A673 (cell line): ENCODE measurements at regions of chr5 and their contacts with region 1.

Region 1: DNA sequence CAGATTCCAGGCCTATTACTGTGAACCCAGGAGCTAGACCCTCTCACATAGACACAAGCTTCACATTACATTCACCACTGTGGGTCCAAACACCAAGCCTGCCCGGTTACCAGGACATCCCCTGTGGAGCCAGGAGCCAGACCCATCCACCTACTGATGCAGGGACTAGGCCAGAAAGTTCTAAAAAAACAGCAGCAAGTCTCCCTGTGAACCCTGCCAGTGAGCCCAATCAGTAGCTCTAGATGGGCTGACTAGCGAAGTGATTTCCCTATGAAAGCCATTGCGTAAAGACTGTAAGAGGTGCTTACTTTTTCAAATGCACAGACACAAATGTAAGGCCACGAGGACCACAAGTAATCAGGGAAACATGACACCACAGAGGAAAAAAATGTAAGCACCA is 352.3 kb downstream of the TMEM161B start:
- DNase-seq: no peak
- H3K4me3 ChIP-seq: no peak overlapping the region
- H3K27ac ChIP-seq: no peak overlapping the region
- H3K4me1 ChIP-seq: no peaks in the 10 kb centered on the region
- H3K27me3 ChIP-seq: no peaks in the 10 kb centered on the region
- CTCF ChIP-seq: no peak

Region 2: DNA sequence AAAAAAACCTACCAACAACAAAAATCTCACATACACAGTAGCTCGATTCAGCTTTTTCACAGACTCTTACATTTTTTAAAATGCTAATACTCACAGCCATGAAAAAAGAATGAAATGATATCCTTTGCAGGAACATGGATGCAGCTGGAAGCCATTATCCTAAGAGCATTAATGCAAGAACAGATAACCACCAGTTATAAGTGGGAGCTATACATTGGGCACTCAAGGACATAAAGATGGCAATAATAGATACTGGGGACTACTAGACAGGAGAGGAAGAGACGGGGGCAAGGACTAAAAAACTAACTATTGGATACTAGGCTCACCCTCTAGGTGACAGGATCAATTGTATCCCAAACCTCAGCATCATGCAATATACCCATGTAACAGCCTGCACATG is 413.3 kb before region 1 on chr5:
- CTCF ChIA-PET with region 1: no interaction called
- POLR2A ChIA-PET with region 1: interaction called, 11 read pairs
- intact Hi-C with region 1: no loop called
- DNase-seq: no peak
- H3K4me3 ChIP-seq: no peak overlapping the region
- H3K27ac ChIP-seq: no peak overlapping the region
- H3K4me1 ChIP-seq: no peaks in the 10 kb centered on the region
- H3K27me3 ChIP-seq: no peaks in the 10 kb centered on the region
- CTCF ChIP-seq: no peak